Natural killer cell (primary cell): ENCODE measurements at regions of chr19 and their contacts with region 1.

Region 1: GRCh38 chr19:44500148-44500956 is at the start of gene ZNF180:
- DNase-seq: peak; percentile 96 to 97
- ATAC-seq: peak; percentile 90 to 97 (median 91)
- H3K4me3 ChIP-seq: peak within 1 kb of the TSS; percentile 75
- H3K4me3 Mint-ChIP-seq: peak within 1 kb of the TSS; percentile 97
- H3K27ac ChIP-seq: peak within 1 kb of the TSS; percentile 71
- H3K27ac Mint-ChIP-seq: peak within 1 kb of the TSS; percentile 91 to 95
- H3K4me1 ChIP-seq: peaks cover 31% of the 10 kb centered on the region
- H3K4me1 Mint-ChIP-seq: peaks cover 38 to 49% of the 10 kb centered on the region in 2 donors
- H3K27me3 ChIP-seq: peaks cover 4% of the 10 kb centered on the region
- H3K27me3 Mint-ChIP-seq: peaks cover 6 to 18% of the 10 kb centered on the region in 2 donors
- CTCF ChIP-seq: peak; percentile 55
- total RNA-seq, gene ZNF180: 6.0 to 8.7 (median 8.0) TPM

Region 2: DNA sequence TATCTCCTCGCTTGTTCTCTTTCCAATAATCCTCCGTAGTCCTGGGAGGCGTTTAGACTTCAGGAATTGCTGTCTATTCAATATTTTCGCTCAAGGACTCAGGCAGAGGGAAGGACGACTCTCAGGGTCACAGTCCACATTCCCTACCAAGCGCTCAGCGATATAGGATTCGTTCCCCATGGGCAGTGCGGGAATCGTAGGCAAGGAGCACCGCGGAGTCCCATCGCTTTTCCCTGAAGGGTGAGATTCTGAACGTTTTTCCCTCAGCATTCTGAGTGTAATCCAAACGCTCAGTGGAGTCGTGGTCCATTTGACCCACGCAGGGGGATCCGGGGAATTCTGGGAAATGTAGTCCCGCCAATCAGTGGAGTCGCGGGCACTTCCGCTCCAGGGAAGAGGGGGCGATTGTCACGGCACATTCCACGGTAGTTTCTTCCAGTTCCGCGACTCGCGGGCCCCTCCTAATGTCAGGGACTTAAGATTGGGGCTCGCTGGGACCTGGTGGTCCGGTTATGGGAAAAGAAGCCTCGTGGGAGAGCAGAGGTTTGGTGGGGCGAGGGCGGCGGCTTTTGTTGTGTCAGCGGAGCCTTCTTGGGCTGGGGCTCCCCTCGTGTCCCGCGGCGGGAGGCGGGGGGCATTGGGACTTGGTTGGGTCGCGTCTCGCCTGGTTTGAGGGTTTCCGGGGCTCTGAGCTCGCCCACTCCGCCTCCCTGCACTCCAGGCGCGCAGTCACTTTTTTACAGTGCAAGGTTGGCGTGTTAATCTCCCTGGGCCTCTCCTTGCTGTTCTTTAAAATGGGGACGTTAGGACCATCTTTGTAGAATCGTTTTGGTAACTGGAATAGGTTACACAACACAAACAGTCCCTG is 358.9 kb before region 1 on chr19 and contains the start of gene ZNF234:
- intact Hi-C with region 1: loop called (anchors 1 kb)
- DNase-seq: peak; percentile 34 to 85
- ATAC-seq: peak; percentile 71 to 89 (median 86)
- H3K4me3 ChIP-seq: peak within 1 kb of the TSS; percentile 79
- H3K4me3 Mint-ChIP-seq: peak within 1 kb of the TSS; percentile 95
- H3K27ac ChIP-seq: peak within 1 kb of the TSS; percentile 69
- H3K27ac Mint-ChIP-seq: peak within 1 kb of the TSS; percentile 83 to 88
- H3K4me1 ChIP-seq: peaks cover 11% of the 10 kb centered on the region
- H3K4me1 Mint-ChIP-seq: peaks cover 20 to 23% of the 10 kb centered on the region in 2 donors
- H3K27me3 ChIP-seq: no peaks in the 10 kb centered on the region
- H3K27me3 Mint-ChIP-seq: peaks cover 7 to 13% of the 10 kb centered on the region in 2 donors
- CTCF ChIP-seq: no peak
- total RNA-seq, gene ZNF234: 3.9 to 7.5 (median 5.5) TPM

Region 3: GRCh38 chr19:44447916-44448674 is 52.3 kb before region 1 on chr19 and contains the start of gene ZNF229:
- intact Hi-C with region 1: no loop called
- DNase-seq: peak; percentile 19 to 76
- ATAC-seq: peak; percentile 43 to 78 (median 64)
- H3K4me3 ChIP-seq: peak within 1 kb of the TSS; percentile 45
- H3K4me3 Mint-ChIP-seq: peak within 1 kb of the TSS; percentile 81
- H3K27ac ChIP-seq: no peak within 1 kb of the TSS
- H3K27ac Mint-ChIP-seq: no peak within 1 kb of the TSS
- H3K4me1 ChIP-seq: peaks cover 10% of the 10 kb centered on the region
- H3K4me1 Mint-ChIP-seq: peaks cover 5 to 6% of the 10 kb centered on the region in 2 donors
- H3K27me3 ChIP-seq: no peaks in the 10 kb centered on the region
- H3K27me3 Mint-ChIP-seq: peaks cover 11 to 14% of the 10 kb centered on the region in 2 donors
- CTCF ChIP-seq: no peak
- total RNA-seq, gene ZNF229: 0.09 to 0.15 TPM in 2 of 3 donors, not detected in the other

Region 4: GRCh38 chr19:44476559-44477408 is 23.6 kb before region 1 on chr19:
- intact Hi-C with region 1: no loop called
- DNase-seq: peak in 1 of 2 donors; percentile 13
- ATAC-seq: no peak
- H3K4me3 ChIP-seq: no peak overlapping the region
- H3K4me3 Mint-ChIP-seq: peak overlapping the region; percentile 65
- H3K27ac ChIP-seq: no peak overlapping the region
- H3K27ac Mint-ChIP-seq: peak overlapping the region in 1 of 2 donors; percentile 75
- H3K4me1 ChIP-seq: no peaks in the 10 kb centered on the region
- H3K4me1 Mint-ChIP-seq: no peaks in the 10 kb centered on the region
- H3K27me3 ChIP-seq: no peaks in the 10 kb centered on the region
- H3K27me3 Mint-ChIP-seq: no peaks in the 10 kb centered on the region
- CTCF ChIP-seq: no peak